ENCODE measurements at regions of chr1 and their contacts with region 1.

Region 1: DNA sequence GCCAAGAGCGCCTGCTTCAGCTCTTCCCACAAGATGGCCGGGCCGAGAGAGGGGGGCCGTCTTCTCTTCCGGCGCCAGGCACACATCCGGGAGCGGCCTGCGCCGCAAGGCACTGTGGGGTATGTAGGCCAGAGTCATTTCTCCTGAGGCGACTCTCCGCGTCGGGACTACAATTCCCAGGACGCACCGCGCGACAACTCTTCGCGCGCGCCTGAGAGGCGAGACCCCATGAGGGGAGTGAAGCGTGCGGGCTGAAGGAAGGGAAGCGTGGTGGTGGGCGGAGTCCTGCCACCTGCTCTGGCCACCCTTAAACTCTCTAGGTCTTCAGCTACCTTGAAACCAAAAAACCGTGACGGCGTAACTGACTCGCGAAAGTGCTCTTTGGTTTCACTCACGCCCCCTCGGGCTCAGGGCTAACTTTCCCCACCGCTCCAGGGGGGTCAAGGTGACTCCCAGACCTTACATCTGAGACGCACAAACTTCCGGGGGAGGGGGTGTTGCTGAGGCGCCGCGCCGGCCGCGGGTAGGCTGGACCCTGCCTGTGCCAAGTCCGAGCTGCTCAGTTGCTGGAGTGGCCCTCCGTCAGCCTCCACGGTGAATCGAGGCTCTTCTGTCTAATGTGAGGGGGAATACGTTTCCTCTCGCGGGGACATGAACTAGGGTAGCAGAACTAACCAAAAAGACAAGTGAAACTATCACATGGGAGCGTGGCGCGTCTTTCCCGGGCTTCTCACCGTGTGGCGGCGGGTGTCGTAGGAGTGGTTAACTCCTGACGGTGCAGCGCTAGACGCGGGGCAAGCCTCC is at the start of gene SERBP1:
- DNase-seq: peak; percentile 93
- ATAC-seq: peak; percentile 89
- H3K4me3 Mint-ChIP-seq: peak within 1 kb of the TSS; percentile 90
- H3K27ac Mint-ChIP-seq: peak within 1 kb of the TSS; percentile 97
- H3K4me1 Mint-ChIP-seq: peaks cover 46% of the 10 kb centered on the region
- H3K27me3 Mint-ChIP-seq: no peaks in the 10 kb centered on the region
- total RNA-seq, gene SERBP1: 219 to 221 TPM

Region 2: DNA sequence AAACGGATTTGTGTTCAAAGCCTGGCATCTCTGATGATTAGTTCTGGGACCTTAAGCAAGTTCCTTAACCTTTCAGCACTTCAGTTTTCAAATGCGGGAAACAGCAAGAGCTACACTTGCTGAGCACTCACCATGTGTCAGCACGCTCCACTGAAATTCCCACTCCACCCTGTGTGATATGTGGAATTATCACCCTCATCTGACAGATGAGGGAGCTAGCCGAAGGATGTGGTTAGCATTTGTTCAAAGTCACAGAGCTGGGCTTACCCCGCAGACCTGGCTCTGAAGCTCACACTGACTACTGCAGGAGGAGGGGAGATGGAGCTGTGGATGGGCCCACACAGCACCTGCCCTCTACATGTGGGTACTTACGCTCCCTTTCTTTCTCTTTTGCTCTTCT is 93.8 kb before region 1 on chr1:
- POLR2A ChIA-PET with region 1: interaction called, 11 read pairs
- DNase-seq: peak; percentile 47
- ATAC-seq: peak; percentile 59
- H3K4me3 Mint-ChIP-seq: peak overlapping the region; percentile 80
- H3K27ac Mint-ChIP-seq: peak overlapping the region; percentile 85
- H3K4me1 Mint-ChIP-seq: peaks cover 81% of the 10 kb centered on the region
- H3K27me3 Mint-ChIP-seq: no peaks in the 10 kb centered on the region

Region 3: GRCh38 chr1:67418839-67419586 is 11.5 kb before region 1 on chr1:
- POLR2A ChIA-PET with region 1: interaction called, 11 read pairs
- DNase-seq: no peak
- ATAC-seq: peak; percentile 22
- H3K4me3 Mint-ChIP-seq: no peak overlapping the region
- H3K27ac Mint-ChIP-seq: peak overlapping the region; percentile 51
- H3K4me1 Mint-ChIP-seq: peaks cover 52% of the 10 kb centered on the region
- H3K27me3 Mint-ChIP-seq: no peaks in the 10 kb centered on the region

Region 4: GRCh38 chr1:67524143-67525052 is 93.8 kb after region 1 on chr1:
- POLR2A ChIA-PET with region 1: no interaction called
- DNase-seq: no peak
- ATAC-seq: no peak
- H3K4me3 Mint-ChIP-seq: no peak overlapping the region
- H3K27ac Mint-ChIP-seq: no peak overlapping the region
- H3K4me1 Mint-ChIP-seq: no peaks in the 10 kb centered on the region
- H3K27me3 Mint-ChIP-seq: peaks cover 6% of the 10 kb centered on the region